ENCODE measurements at regions of chr1 and their contacts with region 1.

Region 1: DNA sequence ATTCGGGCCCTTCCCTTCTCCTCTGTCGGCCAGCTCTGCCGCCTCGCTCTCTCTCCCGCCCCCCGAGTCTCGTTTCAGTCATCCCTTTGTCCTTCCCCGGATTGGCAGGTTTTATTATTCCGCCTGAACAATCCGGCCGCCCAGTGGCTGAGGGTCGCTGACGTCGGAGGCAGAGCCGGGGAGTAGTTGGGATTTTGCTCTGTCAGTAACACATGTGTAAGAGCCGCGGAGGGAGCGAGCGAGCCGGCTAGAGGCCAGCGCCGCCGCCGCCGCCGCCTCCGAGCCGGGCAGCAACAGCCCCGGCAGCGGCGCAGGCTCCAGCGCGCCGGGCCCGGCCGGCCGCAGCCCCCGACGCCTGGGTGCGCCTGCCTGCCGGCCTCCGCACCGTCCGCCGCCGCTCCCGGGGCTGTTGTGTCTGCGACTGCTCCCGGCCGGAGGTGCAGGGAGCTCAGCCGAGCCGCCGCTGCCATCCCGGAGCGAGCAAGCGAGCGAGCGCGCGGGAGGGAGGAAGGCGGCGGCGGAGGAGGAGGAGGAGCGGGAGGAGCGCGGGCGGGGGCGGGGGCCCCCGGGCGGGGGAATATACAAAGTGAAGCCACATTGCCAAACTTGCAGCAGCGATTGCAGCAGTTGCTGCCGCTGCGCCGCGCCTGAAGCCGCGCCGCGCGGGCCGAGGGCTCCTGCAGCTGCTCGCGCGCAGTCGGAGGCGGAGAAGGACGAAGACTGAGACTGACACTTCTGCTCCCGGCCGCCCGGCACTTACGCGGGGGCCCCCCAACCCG is at the start of gene LMO4:
- DNase-seq: peak; percentile 94 to 99
- H3K4me3 ChIP-seq: peak within 1 kb of the TSS; percentile 73 to 94
- H3K27ac ChIP-seq: peak within 1 kb of the TSS; percentile 95 to 98
- H3K4me1 ChIP-seq: peaks cover 0 to 11% of the 10 kb centered on the region in 2 donors
- H3K27me3 ChIP-seq: no peaks in the 10 kb centered on the region
- CTCF ChIP-seq: no peak
- total RNA-seq, gene LMO4: 9.9 TPM

Region 2: DNA sequence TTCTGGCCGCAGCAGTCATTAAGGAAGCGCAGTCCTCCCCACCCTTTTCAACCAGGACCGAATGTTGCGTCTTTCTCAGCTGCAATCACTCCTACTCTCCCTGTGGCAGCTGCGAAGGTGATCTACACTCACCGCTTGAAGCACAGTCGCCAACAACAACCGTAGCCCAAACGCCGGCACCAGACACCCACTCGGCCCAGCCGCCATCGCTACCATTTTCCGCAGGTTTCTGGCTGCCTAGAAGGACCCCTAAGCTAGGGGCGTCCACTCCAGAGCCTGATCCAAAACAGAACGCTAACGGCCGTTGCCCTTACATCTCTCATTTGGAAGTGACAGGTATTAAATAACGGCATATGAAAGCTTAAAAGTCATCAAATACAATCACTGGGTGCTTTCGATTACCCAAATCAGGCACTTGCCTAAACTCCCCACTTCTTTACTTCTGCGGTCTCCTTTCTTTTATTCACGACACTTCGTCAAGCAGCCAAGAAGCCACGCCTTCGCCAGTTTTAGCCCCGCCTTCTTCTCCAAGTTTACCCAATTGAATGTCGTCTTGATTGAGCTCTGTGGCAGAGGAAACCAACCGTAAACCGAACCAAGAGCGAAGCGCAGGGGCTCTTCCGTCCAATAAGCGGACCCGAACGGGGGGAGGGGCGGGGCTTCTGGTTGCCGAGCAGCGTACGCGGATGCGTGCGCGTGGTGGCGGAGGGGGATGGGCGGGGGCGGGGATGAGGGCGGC is 414.4 kb before region 1 on chr1 and contains the start of gene SELENOF:
- intact Hi-C with region 1: loop called (anchors 5 kb)
- DNase-seq: peak; percentile 99 to 100
- H3K4me3 ChIP-seq: peak within 1 kb of the TSS; percentile 82 to 85
- H3K27ac ChIP-seq: peak within 1 kb of the TSS; percentile 82 to 92
- H3K4me1 ChIP-seq: peaks cover 0 to 17% of the 10 kb centered on the region in 2 donors
- H3K27me3 ChIP-seq: no peaks in the 10 kb centered on the region
- CTCF ChIP-seq: no peak
- total RNA-seq, gene SELENOF: 124 TPM

Region 3: GRCh38 chr1:87497380-87498203 is 169.1 kb after region 1 on chr1:
- intact Hi-C with region 1: loop called (anchors 5 kb)
- DNase-seq: no peak
- H3K4me3 ChIP-seq: no peak overlapping the region
- H3K27ac ChIP-seq: peak overlapping the region in 1 of 2 donors; percentile 91
- H3K4me1 ChIP-seq: peaks cover 0 to 4% of the 10 kb centered on the region in 2 donors
- H3K27me3 ChIP-seq: no peaks in the 10 kb centered on the region
- CTCF ChIP-seq: no peak

Region 4: GRCh38 chr1:87513255-87513654 is 184.8 kb after region 1 on chr1:
- intact Hi-C with region 1: no loop called
- DNase-seq: no peak
- H3K4me3 ChIP-seq: no peak overlapping the region
- H3K27ac ChIP-seq: no peak overlapping the region
- H3K4me1 ChIP-seq: no peaks in the 10 kb centered on the region
- H3K27me3 ChIP-seq: no peaks in the 10 kb centered on the region
- CTCF ChIP-seq: no peak

Region 5: DNA sequence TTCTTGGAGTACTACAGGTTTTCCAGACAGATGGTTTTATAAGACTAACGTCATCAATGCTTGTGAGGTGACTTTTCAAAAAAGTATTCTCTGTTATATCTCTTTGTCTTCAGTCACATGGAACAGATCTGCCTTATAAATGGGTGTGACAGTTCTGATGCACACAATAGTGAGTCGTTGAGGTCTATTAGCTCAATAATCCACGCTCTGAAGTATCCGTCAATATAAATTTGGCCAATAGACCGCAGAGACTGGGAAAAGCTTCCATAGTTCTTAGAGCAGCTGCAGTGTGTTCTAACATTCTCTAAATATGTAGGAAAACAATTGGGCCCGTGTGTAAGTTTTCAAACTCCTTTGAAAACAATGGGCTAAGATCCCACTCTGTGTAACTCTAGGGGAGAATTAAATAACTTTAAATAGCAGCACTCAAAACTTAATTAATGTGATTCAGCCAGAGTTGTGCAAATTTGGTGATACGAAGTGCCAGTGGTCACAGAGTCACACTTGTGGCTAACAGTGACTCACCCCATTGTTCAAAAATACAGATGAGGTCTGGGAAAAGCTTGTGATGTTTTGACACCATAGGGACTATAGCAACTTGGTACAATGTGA is 316.2 kb after region 1 on chr1:
- intact Hi-C with region 1: loop called (anchors 5 kb)
- DNase-seq: no peak
- H3K4me3 ChIP-seq: no peak overlapping the region
- H3K27ac ChIP-seq: peak overlapping the region; percentile 33 to 48
- H3K4me1 ChIP-seq: peaks cover 0 to 5% of the 10 kb centered on the region in 2 donors
- H3K27me3 ChIP-seq: no peaks in the 10 kb centered on the region
- CTCF ChIP-seq: no peak

Region 6: GRCh38 chr1:87684194-87684593 is 355.7 kb after region 1 on chr1:
- intact Hi-C with region 1: loop called (anchors 5 kb)
- DNase-seq: no peak
- H3K4me3 ChIP-seq: peak overlapping the region; percentile 57 to 65
- H3K27ac ChIP-seq: peak overlapping the region; percentile 52 to 53
- H3K4me1 ChIP-seq: no peaks in the 10 kb centered on the region
- H3K27me3 ChIP-seq: no peaks in the 10 kb centered on the region
- CTCF ChIP-seq: no peak

Region 7: GRCh38 chr1:87805666-87806378 is 477.4 kb after region 1 on chr1:
- intact Hi-C with region 1: loop called (anchors 5 kb)
- DNase-seq: no peak
- H3K4me3 ChIP-seq: peak overlapping the region; percentile 20 to 39
- H3K27ac ChIP-seq: peak overlapping the region in 1 of 2 donors; percentile 19
- H3K4me1 ChIP-seq: no peaks in the 10 kb centered on the region
- H3K27me3 ChIP-seq: no peaks in the 10 kb centered on the region
- CTCF ChIP-seq: no peak

Region 8: GRCh38 chr1:87953732-87954344 is 625.4 kb after region 1 on chr1:
- intact Hi-C with region 1: loop called (anchors 1 kb)
- DNase-seq: peak; percentile 11 to 85
- H3K4me3 ChIP-seq: no peak overlapping the region
- H3K27ac ChIP-seq: no peak overlapping the region
- H3K4me1 ChIP-seq: peaks cover 5 to 14% of the 10 kb centered on the region in 2 donors
- H3K27me3 ChIP-seq: no peaks in the 10 kb centered on the region
- CTCF ChIP-seq: peak; percentile 52 to 74 (median 57)